GM10248 (cell line): ENCODE measurements at regions of chr6 and their contacts with region 1.

Region 1: DNA sequence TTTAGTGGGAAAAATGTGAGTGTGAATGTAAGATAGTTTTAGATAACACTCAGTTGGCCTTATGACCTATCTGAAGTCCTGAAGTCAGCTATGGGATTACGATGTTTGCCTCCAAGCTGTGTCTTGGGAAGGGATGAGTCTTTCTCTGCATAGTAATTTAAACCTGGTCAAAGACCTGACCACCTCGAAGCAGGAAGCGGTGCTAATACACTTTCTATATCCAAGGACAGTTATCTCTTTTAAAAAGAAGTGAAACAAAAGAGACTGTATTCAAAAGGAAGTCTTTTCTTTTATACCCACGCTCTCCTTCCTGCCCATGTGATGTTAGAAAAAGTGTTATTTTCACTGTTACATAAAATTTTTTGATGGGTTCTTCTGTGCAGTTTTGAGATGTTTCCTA is 94.9 kb downstream of the JARID2 start:
- DNase-seq: no peak
- CTCF ChIP-seq: no peak

Region 2: DNA sequence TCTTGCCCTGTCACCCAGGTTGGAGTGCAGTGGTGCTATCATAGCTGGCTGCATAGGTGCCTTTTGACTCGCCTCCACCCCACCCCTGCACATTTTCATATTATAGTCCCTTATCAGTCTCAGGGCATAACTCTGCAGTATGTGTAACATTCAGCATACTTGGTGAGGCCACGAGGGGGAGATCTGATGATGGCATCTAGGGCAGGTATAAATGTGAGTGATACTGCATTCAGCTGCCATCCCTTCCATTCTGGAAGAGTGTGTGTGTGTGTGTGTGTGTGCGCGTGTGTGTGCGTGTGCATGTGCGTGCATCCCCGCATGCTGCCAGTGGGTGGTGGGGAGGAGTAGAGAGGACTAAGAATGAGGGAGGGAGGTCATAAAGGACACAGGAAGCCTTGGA is 13.5 kb before region 1 on chr6:
- CTCF ChIA-PET with region 1: interaction called, 13 read pairs
- POLR2A ChIA-PET with region 1: interaction called, 4 read pairs
- DNase-seq: peak; percentile 48
- CTCF ChIP-seq: peak; percentile 44

Region 3: DNA sequence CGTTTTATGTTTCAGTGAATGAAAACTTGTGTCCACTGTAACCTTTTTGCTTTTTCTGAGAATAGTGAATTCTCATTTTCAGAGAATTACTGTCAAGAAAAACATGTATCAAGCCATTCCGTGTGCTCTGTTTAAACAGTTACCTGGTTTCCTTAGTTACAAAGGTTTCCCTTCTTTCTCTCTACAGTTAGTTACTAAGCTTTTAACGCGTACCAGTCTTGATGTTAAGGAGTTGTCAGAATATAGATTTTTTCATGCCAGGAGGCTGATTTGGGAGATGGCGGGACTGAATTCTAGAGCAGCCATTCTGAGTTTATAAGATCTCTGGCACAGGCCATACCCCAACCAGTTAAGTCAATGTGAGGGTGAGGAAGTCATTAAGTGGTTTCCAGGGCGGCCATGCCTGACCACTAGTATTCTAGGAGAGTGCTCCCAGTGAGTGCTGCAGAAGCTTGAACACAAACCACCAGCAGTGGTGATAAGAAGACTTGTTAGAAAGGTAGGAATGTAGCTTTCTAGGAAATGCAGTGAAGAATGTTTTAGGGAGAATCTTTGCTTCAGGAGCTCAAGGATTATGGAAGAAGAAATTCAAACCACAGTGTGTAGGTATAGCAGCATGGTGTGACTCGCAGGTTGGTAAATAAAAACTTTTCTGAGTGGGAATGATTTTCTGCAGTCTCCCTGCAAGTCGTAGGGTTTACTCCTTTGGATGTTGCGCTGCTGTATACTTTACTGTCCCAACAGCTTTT is 18.0 kb after region 1 on chr6:
- CTCF ChIA-PET with region 1: interaction called, 18 read pairs
- POLR2A ChIA-PET with region 1: no interaction called
- DNase-seq: no peak
- CTCF ChIP-seq: no peak